ENCODE measurements at regions of chr7 and their contacts with region 1.

Region 1: GRCh38 chr7:39248041-39248691 is 270.5 kb downstream of the POU6F2 start:
- DNase-seq: no peak

Region 2: DNA sequence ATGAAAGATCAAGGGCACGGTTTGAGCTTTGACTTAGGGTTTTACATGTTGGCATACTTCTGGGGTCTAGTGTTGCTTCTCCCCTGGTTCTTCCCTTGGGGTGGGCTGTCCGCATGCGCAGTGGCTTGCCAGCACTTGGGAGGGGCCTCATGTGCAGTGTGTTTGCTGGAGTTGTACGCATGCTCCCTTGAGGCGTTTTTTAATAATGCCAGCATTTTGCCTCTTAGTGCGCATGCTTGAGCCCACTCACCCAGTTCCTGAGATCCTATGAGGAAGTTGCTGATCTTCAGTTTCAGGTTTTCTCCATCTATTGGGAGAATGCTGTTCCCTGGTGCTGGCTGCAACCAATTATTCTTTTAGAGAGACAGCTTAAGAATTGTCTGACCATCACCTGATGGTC is 1678.0 kb before region 1 on chr7:
- intact Hi-C with region 1: no loop called
- DNase-seq: no peak

Region 3: GRCh38 chr7:39270018-39270417 is 21.9 kb after region 1 on chr7:
- intact Hi-C with region 1: loop called in 1 of 2 experiments (anchors 1 kb)
- DNase-seq: no peak